ENCODE measurements at regions of chr13 and their contacts with region 1.

Region 1: DNA sequence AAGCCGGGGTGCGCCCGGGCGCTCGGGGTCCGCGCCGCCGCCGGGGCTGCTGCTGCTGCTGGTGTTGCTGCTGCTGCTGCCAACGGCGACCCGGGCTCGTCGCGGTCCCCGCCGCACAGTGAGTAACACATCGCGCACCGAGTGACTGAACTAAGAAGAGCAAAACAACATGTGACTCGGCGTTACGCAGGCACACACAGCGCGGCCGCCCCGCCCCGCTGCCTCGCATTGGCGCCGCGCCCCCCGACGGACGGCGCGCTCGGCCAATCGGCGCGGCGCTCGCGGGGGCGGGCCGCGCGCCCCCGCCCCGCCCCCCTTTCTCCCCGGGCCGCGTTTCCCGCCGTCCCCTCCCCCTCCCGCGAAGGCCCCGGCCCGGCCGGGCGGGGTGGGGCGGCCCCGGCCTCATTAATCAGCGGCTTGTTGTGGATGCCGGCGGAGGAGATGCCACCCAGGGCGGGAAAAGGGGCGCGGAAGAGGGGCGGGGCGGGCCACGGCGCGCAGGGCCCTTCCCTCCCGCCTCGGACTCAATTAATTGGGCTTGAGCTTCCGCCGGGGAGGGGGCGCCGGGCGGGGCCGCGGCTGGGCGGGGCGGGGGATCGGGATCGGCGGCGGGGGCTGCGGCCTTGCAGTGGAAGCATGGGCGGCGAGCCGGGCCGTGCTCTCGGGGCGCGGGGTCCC is at the start of gene IRS2:
- DNase-seq: peak; percentile 92 to 96
- ATAC-seq: peak; percentile 84 to 88 (median 86)
- H3K4me3 ChIP-seq: peak within 1 kb of the TSS; percentile 92
- H3K27ac ChIP-seq: peak within 1 kb of the TSS; percentile 92
- H3K4me1 ChIP-seq: peaks cover 16% of the 10 kb centered on the region
- H3K27me3 ChIP-seq: peaks cover 0 to 4% (median 0%) of the 10 kb centered on the region in 3 donors
- CTCF ChIP-seq: no peak
- total RNA-seq, gene IRS2: 9.3 to 40.8 (median 27.1) TPM

Region 2: DNA sequence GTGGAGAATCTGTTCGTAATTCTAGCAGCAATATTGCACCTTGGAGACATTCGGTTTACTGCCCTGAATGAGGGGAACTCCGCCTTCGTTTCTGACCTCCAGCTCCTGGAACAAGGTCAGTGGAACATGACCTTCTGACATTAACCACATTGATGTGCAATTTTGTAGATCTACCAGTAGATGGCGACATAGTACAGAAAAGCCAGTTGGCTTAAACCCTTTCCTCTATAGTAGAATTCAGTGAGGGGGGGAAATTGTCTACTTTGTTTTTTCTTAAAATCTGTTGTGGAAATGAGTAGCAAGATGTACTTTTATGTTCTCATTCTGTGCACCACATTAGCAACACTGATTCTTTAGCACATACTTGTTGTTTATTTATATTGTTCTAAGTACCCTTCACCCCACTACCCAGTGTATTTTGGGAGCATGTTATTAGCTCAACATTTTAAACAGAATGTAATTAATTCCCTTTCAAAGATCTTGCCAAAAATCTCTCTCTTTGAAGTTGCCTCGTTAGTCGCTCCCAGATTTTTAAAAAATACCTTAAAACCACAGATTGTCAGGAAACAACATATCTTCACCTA is 825.0 kb before region 1 on chr13:
- intact Hi-C with region 1: loop called in 1 of 2 experiments (anchors 10 kb)
- DNase-seq: no peak
- ATAC-seq: peak; percentile 57 to 88 (median 76)
- H3K4me3 ChIP-seq: no peak overlapping the region
- H3K27ac ChIP-seq: no peak overlapping the region
- H3K4me1 ChIP-seq: no peaks in the 10 kb centered on the region
- H3K27me3 ChIP-seq: no peaks in the 10 kb centered on the region
- CTCF ChIP-seq: peak; percentile 88

Region 3: DNA sequence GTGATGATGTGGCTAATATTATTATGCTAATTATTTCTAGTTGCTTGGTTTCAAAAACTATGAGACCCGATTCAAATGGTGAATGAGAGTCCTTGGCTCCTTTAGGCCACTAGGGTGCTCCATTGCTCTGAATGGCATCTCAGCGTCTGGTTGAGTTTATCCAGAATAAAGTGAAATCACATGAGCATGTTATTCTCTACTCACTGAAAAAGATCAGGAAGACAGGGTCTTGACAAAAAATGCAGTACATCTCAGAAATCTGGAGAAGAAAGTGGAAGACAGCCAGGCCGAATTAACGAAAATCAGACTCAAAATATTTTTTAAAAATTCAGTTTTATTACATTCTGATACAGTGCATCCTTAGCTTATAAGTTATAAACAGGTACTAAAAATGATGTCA is 641.0 kb before region 1 on chr13:
- intact Hi-C with region 1: loop called (anchors 2 to 10 kb)
- DNase-seq: no peak
- ATAC-seq: peak; percentile 60 to 85 (median 72)
- H3K4me3 ChIP-seq: no peak overlapping the region
- H3K27ac ChIP-seq: no peak overlapping the region
- H3K4me1 ChIP-seq: no peaks in the 10 kb centered on the region
- H3K27me3 ChIP-seq: peaks cover 0 to 22% (median 6%) of the 10 kb centered on the region in 3 donors
- CTCF ChIP-seq: peak; percentile 65

Region 4: DNA sequence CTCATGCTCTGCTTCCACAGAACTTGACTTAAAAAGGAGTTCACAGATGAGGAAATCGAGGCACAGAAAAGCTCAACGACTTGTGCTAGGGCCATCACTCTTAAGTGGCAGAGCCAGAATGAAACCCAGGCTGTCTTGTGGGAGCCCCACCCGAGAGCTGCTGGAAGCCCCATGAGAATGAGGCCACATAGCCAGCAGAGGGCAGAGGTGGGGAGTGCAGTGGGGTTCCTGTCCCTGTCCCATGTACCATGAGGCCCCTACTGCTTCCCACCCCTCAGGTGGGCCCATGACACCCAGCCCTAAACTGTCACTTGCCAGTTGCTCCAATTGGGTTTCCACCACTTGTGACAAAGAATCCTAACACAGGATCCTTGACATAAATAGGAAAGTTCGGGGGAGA is 176.1 kb before region 1 on chr13:
- intact Hi-C with region 1: loop called in 1 of 2 experiments (anchors 10 kb)
- DNase-seq: peak in 1 of 2 donors; percentile 62
- ATAC-seq: peak in 3 of 4 donors; percentile 55 to 65 (median 59)
- H3K4me3 ChIP-seq: no peak overlapping the region
- H3K27ac ChIP-seq: no peak overlapping the region
- H3K4me1 ChIP-seq: no peaks in the 10 kb centered on the region
- H3K27me3 ChIP-seq: no peaks in the 10 kb centered on the region
- CTCF ChIP-seq: peak; percentile 25

Region 5: GRCh38 chr13:110108347-110109174 is 322.0 kb after region 1 on chr13:
- intact Hi-C with region 1: loop called in 1 of 2 experiments (anchors 2 kb)
- DNase-seq: peak; percentile 78 to 86
- ATAC-seq: peak; percentile 75 to 87 (median 78)
- H3K4me3 ChIP-seq: no peak overlapping the region
- H3K27ac ChIP-seq: peak overlapping the region; percentile 83
- H3K4me1 ChIP-seq: peaks cover 13% of the 10 kb centered on the region
- H3K27me3 ChIP-seq: no peaks in the 10 kb centered on the region
- CTCF ChIP-seq: peak; percentile 61

Region 6: GRCh38 chr13:110116072-110116487 is 329.5 kb after region 1 on chr13:
- intact Hi-C with region 1: loop called (anchors 2 to 5 kb)
- DNase-seq: peak; percentile 70 to 80
- ATAC-seq: peak; percentile 54 to 76 (median 62)
- H3K4me3 ChIP-seq: no peak overlapping the region
- H3K27ac ChIP-seq: no peak overlapping the region
- H3K4me1 ChIP-seq: no peaks in the 10 kb centered on the region
- H3K27me3 ChIP-seq: no peaks in the 10 kb centered on the region
- CTCF ChIP-seq: peak; percentile 78